Astrocyte of the cerebellum (primary cell): ENCODE measurements at regions of chr11 and their contacts with region 1.

Region 1: GRCh38 chr11:31001427-31001826 is 368.1 kb downstream of the DCDC1 start:
- DNase-seq: no peak
- H3K4me3 ChIP-seq: no peak overlapping the region
- CTCF ChIP-seq: no peak

Region 2: GRCh38 chr11:31045335-31045734 is 43.9 kb after region 1 on chr11:
- in situ Hi-C with region 1: loop called (anchors 5 kb)
- DNase-seq: peak; percentile 11
- H3K4me3 ChIP-seq: no peak overlapping the region
- CTCF ChIP-seq: peak; percentile 21